CD4-positive, alpha-beta T cell (primary cell): ENCODE measurements at regions of chr3 and their contacts with region 1.

Region 1: GRCh38 chr3:161310649-161311423 is 60.5 kb downstream of the SPTSSB start:
- DNase-seq: peak in 12 of 14 experiments; percentile 9 to 87 (median 22)
- ATAC-seq: peak; percentile 78
- H3K4me3 ChIP-seq: no peak overlapping the region
- H3K4me3 Mint-ChIP-seq: peak overlapping the region; percentile 26
- H3K27ac ChIP-seq: no peak overlapping the region
- H3K27ac Mint-ChIP-seq: peak overlapping the region; percentile 50
- H3K4me1 ChIP-seq: peaks cover 43% of the 10 kb centered on the region
- H3K4me1 Mint-ChIP-seq: peaks cover 63% of the 10 kb centered on the region
- H3K27me3 ChIP-seq: no peaks in the 10 kb centered on the region
- H3K27me3 Mint-ChIP-seq: no peaks in the 10 kb centered on the region
- CTCF ChIP-seq: no peak

Region 2: DNA sequence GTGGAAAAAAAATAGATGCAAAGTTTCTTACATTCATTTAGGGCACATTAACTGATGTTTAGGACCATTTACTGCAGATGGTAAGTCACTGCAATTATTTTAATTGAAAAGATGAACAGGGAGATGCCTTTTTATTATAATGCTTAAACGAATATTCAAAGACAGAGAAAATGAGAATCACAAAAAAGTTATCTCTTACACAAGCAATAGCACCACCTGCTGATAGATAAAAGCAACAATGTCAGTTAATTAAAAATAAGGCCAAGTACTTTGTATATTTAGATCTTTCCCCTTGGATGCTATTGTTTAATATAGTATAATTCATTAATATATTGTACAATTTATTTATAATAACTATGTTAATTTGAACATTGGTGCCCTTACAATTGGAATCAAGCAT is 967.7 kb before region 1 on chr3:
- CTCF ChIA-PET with region 1: no interaction called
- POLR2A ChIA-PET with region 1: no interaction called
- intact Hi-C with region 1: no loop called
- DNase-seq: peak in 3 of 14 experiments; percentile 8 to 22 (median 11)
- ATAC-seq: no peak
- H3K4me3 ChIP-seq: no peak overlapping the region
- H3K4me3 Mint-ChIP-seq: no peak overlapping the region
- H3K27ac ChIP-seq: no peak overlapping the region
- H3K27ac Mint-ChIP-seq: no peak overlapping the region
- H3K4me1 ChIP-seq: no peaks in the 10 kb centered on the region
- H3K4me1 Mint-ChIP-seq: no peaks in the 10 kb centered on the region
- H3K27me3 ChIP-seq: no peaks in the 10 kb centered on the region
- H3K27me3 Mint-ChIP-seq: no peaks in the 10 kb centered on the region
- CTCF ChIP-seq: no peak

Region 3: DNA sequence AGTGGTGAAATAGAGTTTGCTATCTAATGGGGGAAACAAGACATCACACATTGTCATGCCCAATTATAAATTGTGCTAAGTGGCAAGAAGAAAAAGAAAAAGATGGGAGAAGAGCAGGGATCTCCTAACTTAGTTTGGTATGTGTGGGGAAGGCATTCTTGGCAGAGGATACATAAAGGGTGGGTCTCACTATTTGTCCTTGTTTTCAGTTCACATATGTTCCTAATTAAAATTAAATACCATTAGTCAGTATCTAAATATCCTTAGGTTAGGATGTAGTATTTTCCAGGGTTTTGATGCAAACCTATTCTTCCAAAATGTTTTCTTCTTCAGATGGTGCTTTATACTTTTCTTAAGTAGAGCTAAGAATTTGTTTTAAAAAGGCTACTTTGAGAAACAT is 379.4 kb before region 1 on chr3:
- CTCF ChIA-PET with region 1: no interaction called
- POLR2A ChIA-PET with region 1: no interaction called
- intact Hi-C with region 1: no loop called
- DNase-seq: no peak
- ATAC-seq: no peak
- H3K4me3 ChIP-seq: no peak overlapping the region
- H3K4me3 Mint-ChIP-seq: no peak overlapping the region
- H3K27ac ChIP-seq: no peak overlapping the region
- H3K27ac Mint-ChIP-seq: no peak overlapping the region
- H3K4me1 ChIP-seq: no peaks in the 10 kb centered on the region
- H3K4me1 Mint-ChIP-seq: no peaks in the 10 kb centered on the region
- H3K27me3 ChIP-seq: no peaks in the 10 kb centered on the region
- H3K27me3 Mint-ChIP-seq: no peaks in the 10 kb centered on the region
- CTCF ChIP-seq: no peak

Region 4: DNA sequence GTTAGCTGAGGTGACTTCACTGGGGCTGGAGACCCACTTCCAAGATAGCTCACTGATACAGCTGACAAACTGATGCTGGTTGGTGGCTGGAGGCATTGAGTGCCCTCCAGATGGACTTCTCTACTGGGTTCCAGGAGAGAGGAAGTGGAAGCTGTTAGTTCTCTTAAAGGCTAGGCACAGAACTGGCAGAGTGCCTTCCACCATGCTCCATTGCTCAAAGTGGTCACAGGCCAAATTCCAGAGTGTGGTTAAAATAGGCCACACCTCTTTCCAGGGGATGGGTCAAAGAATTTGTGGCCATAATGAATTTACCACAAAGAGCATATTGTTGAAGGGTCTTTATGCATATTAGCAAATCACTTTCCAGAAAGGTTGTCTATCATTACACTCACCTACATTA is 15.5 kb before region 1 on chr3:
- CTCF ChIA-PET with region 1: no interaction called
- POLR2A ChIA-PET with region 1: no interaction called
- intact Hi-C with region 1: no loop called
- DNase-seq: no peak
- ATAC-seq: no peak
- H3K4me3 ChIP-seq: no peak overlapping the region
- H3K4me3 Mint-ChIP-seq: no peak overlapping the region
- H3K27ac ChIP-seq: no peak overlapping the region
- H3K27ac Mint-ChIP-seq: no peak overlapping the region
- H3K4me1 ChIP-seq: no peaks in the 10 kb centered on the region
- H3K4me1 Mint-ChIP-seq: no peaks in the 10 kb centered on the region
- H3K27me3 ChIP-seq: no peaks in the 10 kb centered on the region
- H3K27me3 Mint-ChIP-seq: no peaks in the 10 kb centered on the region
- CTCF ChIP-seq: no peak

Region 5: GRCh38 chr3:161349529-161350278 is 38.9 kb after region 1 on chr3:
- CTCF ChIA-PET with region 1: no interaction called
- POLR2A ChIA-PET with region 1: no interaction called
- intact Hi-C with region 1: loop called in 1 of 2 experiments (anchors 5 kb)
- DNase-seq: peak in 10 of 14 experiments; percentile 2 to 77 (median 31)
- ATAC-seq: peak; percentile 91
- H3K4me3 ChIP-seq: no peak overlapping the region
- H3K4me3 Mint-ChIP-seq: no peak overlapping the region
- H3K27ac ChIP-seq: peak overlapping the region in 1 of 2 donors; percentile 13
- H3K27ac Mint-ChIP-seq: peak overlapping the region; percentile 16
- H3K4me1 ChIP-seq: peaks cover 8% of the 10 kb centered on the region
- H3K4me1 Mint-ChIP-seq: peaks cover 18% of the 10 kb centered on the region
- H3K27me3 ChIP-seq: no peaks in the 10 kb centered on the region
- H3K27me3 Mint-ChIP-seq: no peaks in the 10 kb centered on the region
- CTCF ChIP-seq: no peak

Region 6: GRCh38 chr3:161957467-161957866 is 646.6 kb after region 1 on chr3:
- CTCF ChIA-PET with region 1: no interaction called
- POLR2A ChIA-PET with region 1: no interaction called
- intact Hi-C with region 1: no loop called
- DNase-seq: no peak
- ATAC-seq: no peak
- H3K4me3 ChIP-seq: no peak overlapping the region
- H3K4me3 Mint-ChIP-seq: no peak overlapping the region
- H3K27ac ChIP-seq: no peak overlapping the region
- H3K27ac Mint-ChIP-seq: no peak overlapping the region
- H3K4me1 ChIP-seq: no peaks in the 10 kb centered on the region
- H3K4me1 Mint-ChIP-seq: no peaks in the 10 kb centered on the region
- H3K27me3 ChIP-seq: no peaks in the 10 kb centered on the region
- H3K27me3 Mint-ChIP-seq: no peaks in the 10 kb centered on the region
- CTCF ChIP-seq: no peak